H1 (cell line): ENCODE measurements at regions of chr21 and their contacts with region 1.

Region 1: GRCh38 chr21:39518138-39518846 is 66.5 kb downstream of the SH3BGR start:
- DNase-seq: peak; percentile 43 to 60
- H3K4me3 ChIP-seq: no peak overlapping the region
- H3K27ac ChIP-seq: no peak overlapping the region
- H3K4me1 ChIP-seq: peaks cover 0 to 5% (median 0%) of the 10 kb centered on the region in 4 experiments; a peak in 2 of 7 replicates
- H3K27me3 ChIP-seq: no peaks in the 10 kb centered on the region
- CTCF ChIP-seq: peak; percentile 65 to 99 (median 91)
- EP300 ChIP-seq: no peak
- POLR2A ChIP-seq: no peak
- RAD21 ChIP-seq: peak; percentile 100

Region 2: GRCh38 chr21:39705849-39706248 is 187.6 kb after region 1 on chr21:
- CTCF ChIA-PET with region 1: interaction called, 11 read pairs
- POLR2A ChIA-PET with region 1: interaction called, 3 read pairs
- DNase-seq: no peak
- H3K4me3 ChIP-seq: no peak overlapping the region
- H3K27ac ChIP-seq: no peak overlapping the region
- H3K4me1 ChIP-seq: peaks cover 3 to 12% (median 9%) of the 10 kb centered on the region in 4 experiments
- H3K27me3 ChIP-seq: no peaks in the 10 kb centered on the region
- CTCF ChIP-seq: no peak
- EP300 ChIP-seq: no peak
- POLR2A ChIP-seq: no peak
- RAD21 ChIP-seq: no peak